Mammary epithelial cell (primary cell): ENCODE measurements at regions of chr19 and their contacts with region 1.

Region 1: DNA sequence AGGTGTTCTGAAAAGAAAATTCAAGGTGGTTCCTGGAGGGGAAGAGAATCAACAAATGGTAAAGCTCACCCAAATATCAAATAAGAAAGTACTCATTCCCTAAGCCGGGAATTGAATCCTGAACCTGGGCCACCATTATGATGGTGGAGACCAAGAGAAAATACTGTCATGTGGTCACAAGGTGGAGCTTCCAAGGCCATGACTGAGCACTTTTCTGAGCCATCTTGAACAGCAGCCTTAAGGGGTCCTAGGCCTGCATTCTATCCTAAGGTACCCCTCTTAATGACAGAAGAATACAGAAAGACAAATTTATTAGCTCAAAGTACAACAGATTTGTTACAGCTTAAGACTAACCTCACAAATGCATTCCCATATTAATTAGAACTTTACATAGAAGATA is 9.6 kb downstream of the ZNF431 start:
- DNase-seq: no peak
- H3K4me3 ChIP-seq: no peak overlapping the region
- H3K27ac ChIP-seq: no peak overlapping the region
- H3K4me1 ChIP-seq: no peaks in the 10 kb centered on the region
- H3K27me3 ChIP-seq: no peaks in the 10 kb centered on the region
- CTCF ChIP-seq: no peak

Region 2: DNA sequence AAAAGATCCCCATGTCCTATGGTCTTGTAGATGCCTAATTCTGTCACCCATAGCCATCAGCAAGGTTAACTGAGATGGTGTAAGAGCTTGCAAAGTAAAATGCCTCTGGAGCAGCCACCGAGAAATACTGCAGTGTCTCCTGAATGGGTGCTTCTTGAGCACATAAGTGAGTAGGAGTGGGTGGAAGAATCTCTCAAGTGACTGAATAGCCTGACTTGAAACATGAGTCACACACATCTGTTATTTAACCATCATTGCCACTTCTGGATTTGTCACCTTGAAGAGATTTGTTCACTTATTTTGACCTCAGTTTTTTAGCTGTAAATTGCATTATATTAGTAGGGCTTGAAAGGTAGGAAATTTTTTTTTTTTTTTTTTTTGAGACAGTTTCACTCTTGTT is 67.1 kb before region 1 on chr19:
- CTCF ChIA-PET with region 1: no interaction called
- dilution Hi-C with region 1: no loop called
- in situ Hi-C with region 1: no loop called
- intact Hi-C with region 1: loop called (anchors 1 kb)
- DNase-seq: peak; percentile 65
- H3K4me3 ChIP-seq: no peak overlapping the region
- H3K27ac ChIP-seq: no peak overlapping the region
- H3K4me1 ChIP-seq: peaks cover 3% of the 10 kb centered on the region
- H3K27me3 ChIP-seq: no peaks in the 10 kb centered on the region
- CTCF ChIP-seq: no peak

Region 3: DNA sequence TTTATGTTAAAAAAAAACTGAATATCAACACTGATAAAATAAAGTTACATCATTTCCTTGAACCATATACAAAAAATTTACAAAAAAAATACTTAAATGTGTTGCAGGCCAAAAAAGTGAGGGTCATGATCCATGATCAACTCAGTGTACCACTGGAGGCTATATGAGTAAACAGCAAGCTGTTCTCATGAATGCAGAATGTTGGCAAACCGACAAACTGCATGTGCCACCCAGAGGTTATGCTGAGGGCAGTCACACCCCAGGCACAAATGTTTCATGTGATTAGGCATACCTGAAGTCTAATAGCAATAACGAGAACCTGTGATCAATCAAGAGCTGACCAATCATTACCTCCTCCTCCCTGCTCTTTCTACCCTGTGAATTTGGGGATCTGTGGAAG is 82.2 kb after region 1 on chr19:
- CTCF ChIA-PET with region 1: no interaction called
- dilution Hi-C with region 1: no loop called
- in situ Hi-C with region 1: no loop called
- intact Hi-C with region 1: no loop called
- DNase-seq: peak; percentile 11
- H3K4me3 ChIP-seq: no peak overlapping the region
- H3K27ac ChIP-seq: no peak overlapping the region
- H3K4me1 ChIP-seq: no peaks in the 10 kb centered on the region
- H3K27me3 ChIP-seq: no peaks in the 10 kb centered on the region
- CTCF ChIP-seq: no peak